K562 (cell line): ENCODE measurements at regions of chr19 and their contacts with region 1.

Region 1: GRCh38 chr19:7868676-7869452 is 5.3 kb downstream of the PRR36 start:
- DNase-seq: peak; percentile 78 to 94 (median 85)
- ATAC-seq: peak; percentile 68
- H3K4me3 ChIP-seq: peak overlapping the region; percentile 75
- H3K27ac ChIP-seq: peak overlapping the region; percentile 71
- H3K4me1 ChIP-seq: peaks cover 15 to 89% of the 10 kb centered on the region in 2 experiments; a peak in 4 of 5 replicates
- H3K27me3 ChIP-seq: no peaks in the 10 kb centered on the region; a peak in 1 of 5 replicates
- CTCF ChIP-seq: peak; percentile 56 to 94 (median 76)
- EP300 ChIP-seq: no peak
- POLR2A ChIP-seq: no peak; the same call in 1 of the 2 replicates
- RAD21 ChIP-seq: peak in 1 of 2 experiments; percentile 49; a peak in 3 of 4 replicates

Region 2: GRCh38 chr19:7858109-7858830 is 10.6 kb before region 1 on chr19:
- CTCF ChIA-PET with region 1: no interaction called
- POLR2A ChIA-PET with region 1: interaction called, 14 read pairs
- in situ Hi-C with region 1: no loop called
- intact Hi-C with region 1: no loop called
- DNase-seq: peak; percentile 83 to 86 (median 84)
- ATAC-seq: peak; percentile 78
- H3K4me3 ChIP-seq: peak overlapping the region; percentile 24
- H3K27ac ChIP-seq: peak overlapping the region; percentile 66; the same call in 2 of the 3 replicates
- H3K4me1 ChIP-seq: peaks cover 20 to 78% of the 10 kb centered on the region in 2 experiments
- H3K27me3 ChIP-seq: no peaks in the 10 kb centered on the region
- CTCF ChIP-seq: peak in 1 of 3 experiments; percentile 27; a peak in 1 of 6 replicates
- EP300 ChIP-seq: peak; percentile 29; the same call in 1 of the 2 replicates
- POLR2A ChIP-seq: no peak
- RAD21 ChIP-seq: no peak

Region 3: DNA sequence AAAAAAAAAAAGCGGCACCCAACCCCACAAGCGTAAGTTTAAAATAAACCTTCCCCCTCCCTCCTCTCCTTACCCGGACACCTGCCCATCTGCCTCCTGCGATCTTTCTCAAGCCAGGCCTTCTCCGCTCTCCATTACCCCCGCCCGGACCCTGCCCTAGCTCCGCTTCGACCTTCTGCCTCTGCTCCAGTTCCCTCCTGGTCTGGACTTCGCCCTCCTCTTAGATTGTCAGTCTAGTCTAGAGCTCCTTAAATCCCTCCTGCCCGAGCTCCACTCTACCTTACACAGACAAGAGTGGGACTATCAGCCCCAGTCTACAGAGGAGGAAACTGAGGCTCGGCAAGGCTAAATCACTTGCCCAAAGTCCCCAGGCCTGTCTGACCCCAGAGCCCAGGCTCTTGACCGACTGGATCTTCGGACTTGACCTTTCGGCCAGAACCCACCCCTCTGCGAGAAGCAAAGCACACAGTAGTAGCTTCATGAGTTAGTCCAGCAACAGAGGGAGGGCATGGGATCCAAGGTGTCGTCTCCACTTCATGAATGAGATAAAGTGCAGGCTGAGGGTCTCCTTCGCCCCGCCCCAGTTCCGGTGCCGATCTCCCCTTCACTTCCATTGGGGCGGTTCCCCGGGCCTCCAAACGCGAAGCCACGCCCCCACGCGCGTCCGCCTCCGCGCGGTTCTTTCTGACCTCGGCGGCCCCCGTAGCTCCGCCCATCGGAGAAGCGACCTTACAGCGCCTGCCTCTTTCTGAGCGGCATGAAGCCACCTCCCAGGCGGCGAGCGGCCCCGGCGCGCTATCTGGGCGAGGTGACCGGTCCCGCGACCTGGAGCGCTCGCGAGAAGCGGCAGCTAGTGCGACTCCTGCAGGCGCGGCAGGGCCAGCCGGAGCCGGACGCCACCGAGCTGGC is 51.0 kb after region 1 on chr19 and contains the start of gene SNAPC2:
- CTCF ChIA-PET with region 1: interaction called, 3 read pairs
- POLR2A ChIA-PET with region 1: interaction called, 16 read pairs
- in situ Hi-C with region 1: no loop called
- intact Hi-C with region 1: loop called (anchors 5 kb)
- DNase-seq: peak; percentile 81 to 99 (median 85)
- ATAC-seq: peak; percentile 86
- H3K4me3 ChIP-seq: peak within 1 kb of the TSS; percentile 81
- H3K27ac ChIP-seq: peak within 1 kb of the TSS; percentile 89
- H3K4me1 ChIP-seq: peaks cover 9 to 73% of the 10 kb centered on the region in 2 experiments
- H3K27me3 ChIP-seq: no peaks in the 10 kb centered on the region
- CTCF ChIP-seq: peak in 2 of 3 experiments; percentile 5 to 21; a peak in 2 of 6 replicates
- EP300 ChIP-seq: no peak
- POLR2A ChIP-seq: peak; percentile 81
- RAD21 ChIP-seq: no peak
- polyA plus RNA-seq, gene SNAPC2: 0.59 to 1.4 TPM